A549 (cell line): ENCODE measurements at regions of chr7 and their contacts with region 1.

Region 1: GRCh38 chr7:97845622-97846203 is 26.5 kb downstream of the ASNS start:
- DNase-seq: peak; percentile 16 to 24
- ATAC-seq: peak in 1 of 2 experiments; percentile 64; a peak in 3 of 6 replicates
- H3K4me3 ChIP-seq: no peak overlapping the region
- H3K27ac ChIP-seq: no peak overlapping the region
- H3K4me1 ChIP-seq: no peaks in the 10 kb centered on the region
- CTCF ChIP-seq: peak; percentile 74
- EP300 ChIP-seq: no peak
- POLR2A ChIP-seq: no peak
- RAD21 ChIP-seq: peak; percentile 60 to 69

Region 2: DNA sequence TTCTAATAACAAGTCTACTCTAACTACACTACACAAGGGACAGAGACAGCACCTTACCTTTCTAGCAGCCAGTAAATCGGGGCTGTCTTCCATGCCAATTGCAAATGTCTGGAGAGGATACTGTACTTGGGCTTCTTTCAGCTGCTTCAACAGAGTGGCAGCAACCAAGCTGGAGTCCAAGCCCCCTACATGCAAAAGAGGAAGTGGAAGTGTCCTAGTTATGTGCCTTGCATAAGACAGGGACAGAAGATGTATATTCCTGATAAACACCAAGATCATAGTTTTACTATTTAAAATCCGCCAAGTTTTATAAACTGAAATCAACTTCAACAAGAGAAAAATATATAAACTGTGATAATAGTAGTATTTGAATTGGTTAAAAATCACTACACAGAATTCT is 12.5 kb after region 1 on chr7:
- CTCF ChIA-PET with region 1: interaction called, 12 read pairs
- POLR2A ChIA-PET with region 1: no interaction called
- DNase-seq: no peak
- ATAC-seq: no peak
- H3K4me3 ChIP-seq: no peak overlapping the region
- H3K27ac ChIP-seq: no peak overlapping the region
- H3K4me1 ChIP-seq: no peaks in the 10 kb centered on the region
- CTCF ChIP-seq: no peak
- EP300 ChIP-seq: no peak
- POLR2A ChIP-seq: no peak
- RAD21 ChIP-seq: no peak

Region 3: DNA sequence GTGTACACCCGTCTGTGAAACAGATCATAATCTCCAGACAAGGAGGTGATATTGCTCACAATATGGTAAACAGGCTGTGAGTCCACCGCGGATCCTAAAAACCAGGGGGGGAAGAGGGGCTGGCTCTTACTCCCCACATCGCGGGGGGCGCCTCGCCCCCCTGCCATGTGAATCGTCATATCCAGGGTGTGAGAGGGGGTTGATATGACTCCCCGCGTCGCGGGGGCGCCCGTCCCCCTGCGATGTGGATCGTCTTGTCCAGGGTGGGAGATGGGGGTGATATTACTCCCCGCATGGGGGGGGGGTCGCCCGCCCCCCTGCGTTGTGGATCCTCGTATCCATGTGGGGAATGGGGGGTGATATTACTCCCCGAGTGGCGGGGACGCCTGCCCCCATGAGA is 113.3 kb after region 1 on chr7:
- CTCF ChIA-PET with region 1: no interaction called
- POLR2A ChIA-PET with region 1: no interaction called
- DNase-seq: no peak
- ATAC-seq: no peak
- H3K4me3 ChIP-seq: no peak overlapping the region
- H3K27ac ChIP-seq: no peak overlapping the region
- H3K4me1 ChIP-seq: no peaks in the 10 kb centered on the region
- CTCF ChIP-seq: no peak
- EP300 ChIP-seq: no peak
- POLR2A ChIP-seq: no peak
- RAD21 ChIP-seq: no peak